ENCODE measurements at regions of chr18 and their contacts with region 1.

Region 1: GRCh38 chr18:51196118-51196810 is 1.2 kb downstream of the MEX3C start:
- DNase-seq: peak in 34 of 35 experiments; percentile 10 to 70 (median 38)
- ATAC-seq: peak in 1 of 4 experiments; percentile 0
- H3K4me3 ChIP-seq: peak overlapping the region; percentile 52 to 76
- H3K4me3 Mint-ChIP-seq: peak overlapping the region; percentile 94 to 97 (median 94)
- H3K27ac ChIP-seq: peak overlapping the region; percentile 76
- H3K27ac Mint-ChIP-seq: peak overlapping the region; percentile 74 to 96
- H3K4me1 ChIP-seq: peaks cover 13 to 29% of the 10 kb centered on the region in 2 experiments
- H3K4me1 Mint-ChIP-seq: peaks cover 44 to 51% (median 48%) of the 10 kb centered on the region in 3 donors
- H3K27me3 ChIP-seq: no peaks in the 10 kb centered on the region
- H3K27me3 Mint-ChIP-seq: no peaks in the 10 kb centered on the region

Region 2: GRCh38 chr18:51182824-51183223 is 13.4 kb before region 1 on chr18:
- CTCF ChIA-PET with region 1: interaction called in 1 of 2 experiments, 4 read pairs
- POLR2A ChIA-PET with region 1: interaction called in 1 of 2 experiments, 12 read pairs
- DNase-seq: no peak
- ATAC-seq: no peak
- H3K4me3 ChIP-seq: no peak overlapping the region
- H3K4me3 Mint-ChIP-seq: no peak overlapping the region
- H3K27ac ChIP-seq: no peak overlapping the region
- H3K27ac Mint-ChIP-seq: no peak overlapping the region
- H3K4me1 ChIP-seq: peaks cover 13 to 27% of the 10 kb centered on the region in 2 experiments
- H3K4me1 Mint-ChIP-seq: peaks cover 58 to 78% (median 73%) of the 10 kb centered on the region in 3 donors
- H3K27me3 ChIP-seq: no peaks in the 10 kb centered on the region
- H3K27me3 Mint-ChIP-seq: no peaks in the 10 kb centered on the region